ENCODE measurements at regions of chr19 and their contacts with region 1.

Region 1: GRCh38 chr19:40444192-40445028 is at the start of gene SERTAD3:
- DNase-seq: peak; percentile 97
- ATAC-seq: peak; percentile 82 to 90 (median 88)
- H3K4me3 ChIP-seq: peak within 1 kb of the TSS; percentile 70 to 96 (median 85)
- H3K27ac ChIP-seq: peak within 1 kb of the TSS; percentile 80 to 100 (median 97)
- H3K4me1 ChIP-seq: peaks cover 10 to 38% (median 27%) of the 10 kb centered on the region in 9 donors
- H3K27me3 ChIP-seq: no peaks in the 10 kb centered on the region
- CTCF ChIP-seq: peak in 6 of 9 donors; percentile 15 to 51 (median 39)
- total RNA-seq, gene SERTAD3: 19.4 to 37.5 (median 27.4) TPM

Region 2: DNA sequence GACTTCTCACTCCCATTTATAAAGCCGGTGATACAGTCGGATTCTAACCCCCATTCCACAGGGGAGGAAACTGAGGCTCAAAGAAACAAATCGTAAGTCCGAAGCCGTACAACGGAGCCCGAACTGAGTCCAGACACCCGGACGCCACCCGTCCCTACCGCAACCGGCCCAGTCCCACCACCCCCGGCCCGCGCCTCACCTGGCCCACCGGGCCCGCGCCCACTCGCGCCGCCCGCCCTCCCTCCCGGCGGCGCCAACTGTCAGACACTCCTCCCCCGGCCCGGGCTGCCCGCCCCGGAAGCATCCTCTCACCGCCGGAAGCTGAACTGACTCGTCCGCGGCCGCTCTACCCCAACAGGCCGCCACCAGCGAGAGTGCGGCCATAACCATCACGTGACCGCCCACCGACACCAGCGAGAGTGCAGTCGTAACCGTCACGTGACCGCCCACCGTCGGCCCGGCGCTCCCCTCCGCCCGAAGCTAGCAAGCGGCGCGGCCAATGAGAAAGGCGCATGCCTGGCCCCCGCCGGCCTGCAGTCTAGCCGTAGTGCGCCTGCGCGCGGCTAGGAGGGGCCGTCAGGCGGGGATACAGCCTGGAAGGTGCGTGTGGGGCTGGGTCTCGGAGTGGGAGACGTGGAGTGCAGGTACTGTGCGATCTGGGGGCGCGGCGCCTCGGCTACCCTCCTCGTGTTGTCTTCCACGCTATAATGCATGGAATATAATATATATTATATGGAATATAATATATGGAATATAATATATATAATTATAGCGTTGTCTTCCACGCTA is 96.1 kb before region 1 on chr19 and contains the starts of genes C19orf47 and PLD3:
- intact Hi-C with region 1: loop called in 2 of 10 experiments (anchors 10 kb)
- DNase-seq: peak; percentile 99
- ATAC-seq: peak; percentile 97 to 99 (median 98)
- H3K4me3 ChIP-seq: peak within 1 kb of the TSS; percentile 59 to 91 (median 76)
- H3K27ac ChIP-seq: peak within 1 kb of the TSS in 9 of 10 donors; percentile 72 to 88 (median 80)
- H3K4me1 ChIP-seq: peaks cover 4 to 45% (median 25%) of the 10 kb centered on the region in 9 donors
- H3K27me3 ChIP-seq: no peaks in the 10 kb centered on the region
- CTCF ChIP-seq: no peak
- total RNA-seq, gene C19orf47: 138 to 227 (median 145) TPM
- total RNA-seq, gene PLD3: 136 to 238 (median 181) TPM

Region 3: DNA sequence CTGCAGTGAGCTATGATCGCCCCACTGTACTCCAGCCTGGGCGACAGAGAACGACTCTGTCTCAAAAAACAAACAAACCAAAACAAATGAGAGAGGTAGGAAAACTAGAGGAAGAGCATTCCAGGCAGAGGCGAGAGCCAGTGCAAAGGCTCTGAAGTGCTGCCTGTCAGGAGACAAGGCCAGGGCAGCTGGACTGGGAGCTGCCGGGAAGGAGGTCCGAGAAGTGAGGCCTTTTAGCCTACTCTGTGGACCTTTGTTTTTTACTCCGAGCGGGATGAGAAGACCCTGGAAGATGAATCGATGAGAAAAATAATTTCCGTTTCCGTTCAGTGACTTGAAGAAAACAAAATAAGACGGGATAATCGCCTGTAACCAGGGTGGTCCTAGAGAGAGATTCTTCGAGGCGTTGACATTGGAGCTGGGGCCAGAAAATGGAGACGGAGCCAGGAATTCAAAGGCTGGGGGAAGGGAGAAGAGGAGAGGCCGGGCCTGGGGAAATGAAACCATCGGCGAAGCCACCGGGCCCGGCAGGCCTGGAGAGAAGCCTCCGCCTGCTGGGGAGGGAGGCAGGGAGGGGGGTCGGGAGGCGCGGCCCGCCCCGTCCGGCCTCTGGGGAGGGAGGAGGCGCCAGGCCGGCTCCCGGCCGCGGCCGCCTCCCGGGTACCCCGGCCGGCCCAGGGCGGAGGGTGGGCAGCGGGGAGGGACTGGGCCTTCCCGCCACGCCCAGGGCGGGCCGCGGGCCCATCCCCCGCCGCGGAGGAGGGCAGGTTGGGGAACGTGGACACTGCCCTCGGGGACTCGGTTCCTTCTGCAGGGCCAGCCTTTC is 10.8 kb before region 1 on chr19:
- intact Hi-C with region 1: loop called in 2 of 10 experiments (anchors 1 kb)
- DNase-seq: peak; percentile 91
- ATAC-seq: peak; percentile 96 to 99 (median 98)
- H3K4me3 ChIP-seq: peak overlapping the region in 9 of 10 donors; percentile 30 to 56 (median 51)
- H3K27ac ChIP-seq: peak overlapping the region; percentile 86 to 99 (median 94)
- H3K4me1 ChIP-seq: peaks cover 0 to 29% (median 25%) of the 10 kb centered on the region in 9 donors
- H3K27me3 ChIP-seq: no peaks in the 10 kb centered on the region
- CTCF ChIP-seq: no peak

Region 4: DNA sequence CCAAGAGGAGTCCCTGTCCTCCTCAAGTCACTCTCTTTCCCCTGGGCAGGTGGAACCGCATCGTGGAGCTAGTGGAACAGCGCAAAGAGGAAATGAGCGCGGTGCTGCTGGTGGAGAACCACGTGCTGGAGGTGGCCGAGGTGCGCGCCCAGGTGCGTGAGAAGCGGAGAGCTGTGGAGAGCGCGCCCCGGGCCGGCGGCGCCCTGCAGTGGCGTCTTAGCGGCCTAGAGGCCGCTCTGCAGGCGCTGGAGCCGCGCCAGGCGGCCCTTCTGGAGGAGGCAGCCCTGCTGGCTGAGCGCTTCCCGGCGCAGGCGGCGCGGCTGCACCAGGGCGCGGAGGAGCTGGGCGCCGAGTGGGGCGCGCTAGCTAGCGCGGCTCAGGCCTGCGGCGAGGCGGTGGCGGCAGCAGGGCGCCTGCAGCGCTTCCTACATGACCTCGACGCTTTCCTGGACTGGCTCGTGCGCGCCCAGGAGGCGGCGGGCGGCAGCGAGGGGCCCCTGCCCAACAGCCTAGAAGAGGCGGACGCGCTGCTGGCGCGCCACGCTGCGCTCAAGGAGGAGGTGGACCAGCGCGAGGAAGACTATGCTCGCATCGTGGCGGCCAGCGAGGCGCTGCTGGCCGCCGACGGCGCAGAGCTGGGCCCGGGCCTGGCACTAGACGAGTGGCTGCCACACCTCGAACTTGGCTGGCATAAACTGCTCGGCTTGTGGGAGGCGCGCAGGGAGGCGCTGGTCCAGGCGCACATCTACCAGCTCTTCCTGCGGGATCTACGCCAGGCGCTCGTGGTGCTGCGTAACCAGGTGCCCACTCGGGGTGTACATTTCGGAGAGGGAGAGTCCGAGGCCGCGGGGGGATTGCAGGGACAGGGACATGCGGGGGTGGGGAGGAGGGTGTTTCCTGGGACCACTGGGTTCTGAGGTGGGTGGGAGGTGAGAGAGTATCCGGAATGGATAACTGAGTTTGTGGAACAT is 75.2 kb after region 1 on chr19:
- intact Hi-C with region 1: no loop called
- DNase-seq: peak in 1 of 2 donors; percentile 33
- ATAC-seq: peak in 3 of 8 donors; percentile 40 to 71 (median 46)
- H3K4me3 ChIP-seq: no peak overlapping the region
- H3K27ac ChIP-seq: no peak overlapping the region
- H3K4me1 ChIP-seq: peaks cover 0 to 15% (median 0%) of the 10 kb centered on the region in 9 donors
- H3K27me3 ChIP-seq: peaks cover 0 to 44% (median 17%) of the 10 kb centered on the region in 7 donors
- CTCF ChIP-seq: peak in 1 of 9 donors; percentile 9

Measured in heart right ventricle (tissue), 16 donors.